Activated T-helper 2 cell treated with anti-CD3 and anti-CD28 coated beads, Interferon-gamma antibody, Interleukin-2, Interleukin-4, amounts not matched to agents 10 μg/mL and 5 μg/mL and 100 μg/mL, durations not matched to agents 14 hours and 24 hours and 36 hours (primary cell): ENCODE measurements at regions of chr11 and their contacts with region 1.

Region 1: DNA sequence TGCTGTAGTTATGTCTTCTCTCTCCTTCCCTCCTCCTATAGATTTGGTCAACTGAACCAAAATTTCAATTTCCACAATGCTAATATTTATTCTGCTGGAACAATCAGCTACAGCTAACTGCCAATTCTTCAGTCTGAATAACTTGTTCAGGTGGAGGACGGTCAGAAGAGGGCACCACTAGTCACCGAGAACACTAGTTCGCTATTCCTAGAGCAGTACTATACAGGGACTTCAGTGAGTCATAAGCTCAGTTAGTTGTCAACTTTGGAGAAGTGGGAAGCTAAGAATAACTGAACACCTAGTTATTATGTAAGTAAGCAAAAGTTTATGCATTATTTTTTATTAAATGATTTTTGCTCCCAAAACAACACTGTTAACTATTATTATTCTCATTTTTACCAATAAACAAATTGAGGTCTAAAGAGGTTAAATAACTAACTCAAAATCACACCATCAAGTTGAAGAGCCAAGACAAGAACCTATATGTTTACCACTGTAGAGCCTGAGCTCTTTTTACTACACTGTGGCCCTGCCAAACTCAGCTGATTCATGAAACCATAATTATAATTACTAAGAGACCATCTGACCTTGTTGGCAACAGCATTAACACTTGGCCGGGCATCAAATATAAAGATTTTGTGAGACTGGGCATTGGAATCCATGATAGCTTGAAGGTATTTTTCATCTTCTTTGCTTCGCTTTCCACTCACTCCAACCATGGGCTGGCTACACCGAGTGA is 59.0 kb downstream of the CEP57 start:
- DNase-seq: no peak
- H3K4me3 Mint-ChIP-seq: no peak overlapping the region
- H3K27ac Mint-ChIP-seq: no peak overlapping the region
- H3K4me1 Mint-ChIP-seq: no peaks in the 10 kb centered on the region
- H3K27me3 Mint-ChIP-seq: no peaks in the 10 kb centered on the region

Region 2: DNA sequence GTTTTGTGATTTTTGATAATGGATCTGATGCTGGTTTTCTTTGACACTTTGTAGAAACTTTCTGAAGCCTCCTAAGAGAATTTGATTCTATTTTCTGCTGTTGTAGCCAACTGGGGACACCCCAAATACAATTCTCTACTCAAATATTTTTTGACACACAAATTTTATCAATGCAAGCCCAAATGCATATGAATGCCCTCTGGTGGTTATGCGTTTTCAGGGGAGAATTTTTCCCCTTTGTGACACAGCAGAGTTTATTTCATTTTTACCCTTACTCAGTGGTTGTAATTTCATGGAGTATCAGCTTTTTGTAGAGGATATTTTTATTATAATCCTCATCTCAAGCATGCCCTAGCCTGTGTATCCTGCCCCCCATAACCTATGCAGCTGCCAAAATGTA is 119.3 kb after region 1 on chr11:
- intact Hi-C with region 1: loop called (anchors 10 kb)
- DNase-seq: no peak
- H3K4me3 Mint-ChIP-seq: no peak overlapping the region
- H3K27ac Mint-ChIP-seq: no peak overlapping the region
- H3K4me1 Mint-ChIP-seq: no peaks in the 10 kb centered on the region
- H3K27me3 Mint-ChIP-seq: peaks cover 4% of the 10 kb centered on the region